CD8-positive, alpha-beta T cell (primary cell): ENCODE measurements at regions of chrX and their contacts with region 1.

Region 1: GRCh38 chrX:102659790-102660757 is 8.8 kb downstream of the GPRASP1 start:
- DNase-seq: peak; percentile 57 to 87 (median 83)
- ATAC-seq: peak; percentile 96
- H3K4me3 ChIP-seq: peak overlapping the region; percentile 40 to 56
- H3K4me3 Mint-ChIP-seq: peak overlapping the region; percentile 85
- H3K27ac ChIP-seq: peak overlapping the region; percentile 40 to 66
- H3K27ac Mint-ChIP-seq: peak overlapping the region; percentile 95
- H3K4me1 ChIP-seq: no peaks in the 10 kb centered on the region
- H3K4me1 Mint-ChIP-seq: peaks cover 51% of the 10 kb centered on the region
- H3K27me3 ChIP-seq: no peaks in the 10 kb centered on the region
- H3K27me3 Mint-ChIP-seq: no peaks in the 10 kb centered on the region
- CTCF ChIP-seq: no peak

Region 2: DNA sequence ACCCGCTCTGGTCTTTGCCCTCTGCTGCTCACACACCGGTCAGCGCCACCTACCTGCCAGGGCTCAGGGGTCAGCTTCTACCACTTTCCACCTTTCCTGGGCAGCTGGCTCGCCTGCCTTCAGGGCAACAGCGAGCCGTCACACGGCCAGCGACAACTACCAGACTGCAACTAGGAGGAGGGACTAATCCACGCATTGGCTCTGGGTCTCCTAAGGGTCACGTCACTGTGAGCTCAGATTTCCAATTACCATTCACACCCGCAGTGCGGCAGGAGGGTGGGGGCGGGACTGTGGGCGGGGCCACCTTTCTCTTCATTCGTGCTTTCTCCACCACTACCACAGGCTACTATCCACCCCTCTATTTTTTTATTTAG is 504.3 kb before region 1 on chrX and contains the start of gene BEX5:
- CTCF ChIA-PET with region 1: no interaction called
- POLR2A ChIA-PET with region 1: no interaction called
- intact Hi-C with region 1: loop called in 1 of 2 experiments (anchors 10 kb)
- DNase-seq: peak; percentile 6 to 79 (median 51)
- ATAC-seq: peak; percentile 96
- H3K4me3 ChIP-seq: peak within 1 kb of the TSS; percentile 48 to 63
- H3K4me3 Mint-ChIP-seq: peak within 1 kb of the TSS; percentile 98
- H3K27ac ChIP-seq: peak within 1 kb of the TSS; percentile 60 to 64
- H3K27ac Mint-ChIP-seq: peak within 1 kb of the TSS; percentile 96
- H3K4me1 ChIP-seq: peaks cover 5% of the 10 kb centered on the region
- H3K4me1 Mint-ChIP-seq: peaks cover 8% of the 10 kb centered on the region
- H3K27me3 ChIP-seq: no peaks in the 10 kb centered on the region
- H3K27me3 Mint-ChIP-seq: peaks cover 10% of the 10 kb centered on the region
- CTCF ChIP-seq: no peak
- total RNA-seq, gene BEX5: 14.0 to 14.4 TPM

Region 3: GRCh38 chrX:102515975-102516941 is 143.8 kb before region 1 on chrX and contains the start of gene TMSB15A:
- CTCF ChIA-PET with region 1: no interaction called
- POLR2A ChIA-PET with region 1: no interaction called
- intact Hi-C with region 1: loop called in 1 of 2 experiments (anchors 10 kb)
- DNase-seq: peak in 8 of 9 experiments; percentile 27 to 63 (median 52)
- ATAC-seq: peak; percentile 65
- H3K4me3 ChIP-seq: peak within 1 kb of the TSS; percentile 23 to 24
- H3K4me3 Mint-ChIP-seq: peak within 1 kb of the TSS; percentile 81
- H3K27ac ChIP-seq: no peak within 1 kb of the TSS
- H3K27ac Mint-ChIP-seq: no peak within 1 kb of the TSS
- H3K4me1 ChIP-seq: peaks cover 7% of the 10 kb centered on the region
- H3K4me1 Mint-ChIP-seq: peaks cover 9% of the 10 kb centered on the region
- H3K27me3 ChIP-seq: peaks cover 0 to 3% of the 10 kb centered on the region in 2 experiments
- H3K27me3 Mint-ChIP-seq: peaks cover 42% of the 10 kb centered on the region
- CTCF ChIP-seq: no peak
- total RNA-seq, gene TMSB15A: not detected

Region 4: DNA sequence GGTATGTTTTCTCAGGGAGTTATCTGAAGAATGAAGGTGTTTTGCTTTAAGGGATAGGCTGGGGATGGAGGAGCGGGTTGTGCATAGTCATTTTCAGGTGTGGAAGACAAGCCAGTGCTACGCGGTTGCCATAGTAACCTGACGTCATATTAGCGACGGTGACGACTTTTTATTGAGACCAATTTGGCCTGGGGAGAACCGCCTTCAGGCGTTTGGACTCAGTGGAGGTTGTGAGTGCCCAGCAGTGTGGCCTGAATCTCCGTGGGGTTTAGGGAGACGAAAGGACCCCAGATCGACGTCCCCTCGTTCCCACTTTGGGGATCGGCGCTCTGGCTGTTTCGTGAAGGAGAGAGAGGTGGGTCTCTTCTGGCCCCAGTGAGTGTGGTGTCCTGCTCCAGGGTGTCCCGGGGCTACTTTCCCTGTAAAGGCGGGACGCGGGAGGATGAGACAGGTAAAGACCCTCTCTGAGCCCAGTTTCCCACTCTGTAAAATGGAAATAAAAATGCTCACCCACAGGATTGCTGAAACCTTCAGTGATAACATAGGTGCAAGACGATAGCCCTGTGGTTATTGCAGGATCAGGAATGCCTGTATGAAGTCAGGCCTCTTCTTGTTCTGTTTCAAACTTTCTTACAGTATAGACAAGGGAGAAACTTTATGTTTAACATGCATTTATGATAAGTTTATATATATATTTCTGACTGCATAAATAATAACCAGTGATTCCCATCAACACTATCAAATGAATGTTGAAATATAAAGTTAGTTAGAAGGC is 109.1 kb after region 1 on chrX:
- CTCF ChIA-PET with region 1: no interaction called
- POLR2A ChIA-PET with region 1: no interaction called
- intact Hi-C with region 1: loop called (anchors 2 to 10 kb)
- DNase-seq: peak; percentile 57 to 90 (median 79)
- ATAC-seq: peak; percentile 83
- H3K4me3 ChIP-seq: peak overlapping the region; percentile 74 to 92
- H3K4me3 Mint-ChIP-seq: peak overlapping the region; percentile 98
- H3K27ac ChIP-seq: peak overlapping the region; percentile 59 to 83
- H3K27ac Mint-ChIP-seq: peak overlapping the region; percentile 97
- H3K4me1 ChIP-seq: no peaks in the 10 kb centered on the region
- H3K4me1 Mint-ChIP-seq: peaks cover 17% of the 10 kb centered on the region
- H3K27me3 ChIP-seq: no peaks in the 10 kb centered on the region
- H3K27me3 Mint-ChIP-seq: no peaks in the 10 kb centered on the region
- CTCF ChIP-seq: no peak